ENCODE measurements at regions of chr19 and their contacts with region 1.

Region 1: DNA sequence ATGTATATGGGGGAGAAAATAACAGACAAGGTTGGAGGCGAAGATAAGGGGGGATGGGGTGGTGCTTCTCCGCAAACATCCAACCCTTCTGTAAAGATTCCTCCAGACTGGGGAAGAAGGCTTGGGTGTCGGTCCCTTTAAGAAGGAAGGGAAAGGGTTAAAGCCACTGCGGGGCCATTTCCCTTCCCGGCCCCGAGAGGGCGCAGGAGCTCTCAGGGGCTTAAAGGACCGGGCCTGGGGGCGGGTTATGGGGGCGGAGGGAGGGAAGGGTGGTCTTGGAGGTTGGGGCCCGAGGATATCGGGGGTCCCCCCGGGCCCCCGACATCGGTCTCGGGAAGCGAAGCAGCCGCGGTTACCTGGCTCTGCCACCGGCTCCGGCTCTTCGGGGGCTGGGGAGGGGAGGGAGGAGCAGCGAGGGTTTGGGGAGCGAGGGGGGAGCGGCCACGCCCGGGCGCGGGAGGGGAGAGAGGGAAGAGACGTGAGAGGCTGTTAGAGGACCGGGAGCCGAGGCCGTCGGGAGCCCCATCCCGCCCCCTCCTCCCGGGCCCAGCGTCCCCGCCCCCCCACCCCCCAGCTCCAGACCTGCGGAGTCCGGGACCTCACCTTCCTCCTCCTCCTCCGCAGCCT is 2.8 kb downstream of the TNNT1 start:
- DNase-seq: peak; percentile 67
- H3K4me3 Mint-ChIP-seq: peak overlapping the region; percentile 63
- H3K27ac Mint-ChIP-seq: no peak overlapping the region
- H3K4me1 Mint-ChIP-seq: peaks cover 24% of the 10 kb centered on the region
- H3K27me3 Mint-ChIP-seq: peaks cover 63% of the 10 kb centered on the region
- CTCF ChIP-seq: peak; percentile 92

Region 2: DNA sequence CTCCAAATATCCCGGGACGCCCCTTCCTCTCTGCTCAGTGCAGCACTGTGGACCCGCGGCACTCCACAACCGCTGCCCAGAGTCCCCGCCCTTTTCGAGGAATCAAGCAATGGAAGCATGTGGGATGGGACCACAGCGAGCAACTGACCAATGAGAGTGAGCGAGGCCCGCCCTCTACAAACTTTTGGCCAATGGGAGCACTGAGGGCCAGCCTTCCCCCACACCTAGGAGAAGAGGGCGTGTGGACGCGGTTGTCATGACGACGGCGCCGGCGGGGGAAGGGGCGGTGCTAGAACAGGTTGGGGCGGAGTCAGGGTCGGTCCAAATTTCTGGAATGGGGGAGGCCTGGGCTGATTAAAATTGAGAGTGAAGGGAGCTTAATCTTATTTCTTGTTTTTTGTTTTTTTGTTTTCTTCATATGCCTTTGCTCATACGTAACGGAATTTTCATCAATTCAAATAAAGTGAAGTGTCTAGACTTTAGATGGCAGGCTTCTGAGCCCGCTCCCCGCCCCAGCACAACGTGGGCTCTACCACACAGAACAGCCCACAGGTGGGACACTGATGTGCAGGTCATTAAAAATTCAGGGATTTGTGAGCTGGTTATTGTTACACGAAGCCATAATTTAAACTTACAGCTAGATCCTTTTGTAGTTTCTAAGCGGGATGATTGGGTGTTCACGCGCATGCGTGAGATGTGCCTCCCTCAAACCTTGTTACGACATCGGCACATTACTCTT is 20.5 kb after region 1 on chr19 and contains the start of gene DNAAF3:
- CTCF ChIA-PET with region 1: interaction called, 19 read pairs
- intact Hi-C with region 1: loop called (anchors 2 kb)
- DNase-seq: peak; percentile 98
- H3K4me3 Mint-ChIP-seq: peak within 1 kb of the TSS; percentile 84
- H3K27ac Mint-ChIP-seq: peak within 1 kb of the TSS; percentile 96
- H3K4me1 Mint-ChIP-seq: peaks cover 6% of the 10 kb centered on the region
- H3K27me3 Mint-ChIP-seq: peaks cover 22% of the 10 kb centered on the region
- CTCF ChIP-seq: no peak
- total RNA-seq, gene DNAAF3: 10.3 and 13.1 TPM in 2 replicates

Region 3: DNA sequence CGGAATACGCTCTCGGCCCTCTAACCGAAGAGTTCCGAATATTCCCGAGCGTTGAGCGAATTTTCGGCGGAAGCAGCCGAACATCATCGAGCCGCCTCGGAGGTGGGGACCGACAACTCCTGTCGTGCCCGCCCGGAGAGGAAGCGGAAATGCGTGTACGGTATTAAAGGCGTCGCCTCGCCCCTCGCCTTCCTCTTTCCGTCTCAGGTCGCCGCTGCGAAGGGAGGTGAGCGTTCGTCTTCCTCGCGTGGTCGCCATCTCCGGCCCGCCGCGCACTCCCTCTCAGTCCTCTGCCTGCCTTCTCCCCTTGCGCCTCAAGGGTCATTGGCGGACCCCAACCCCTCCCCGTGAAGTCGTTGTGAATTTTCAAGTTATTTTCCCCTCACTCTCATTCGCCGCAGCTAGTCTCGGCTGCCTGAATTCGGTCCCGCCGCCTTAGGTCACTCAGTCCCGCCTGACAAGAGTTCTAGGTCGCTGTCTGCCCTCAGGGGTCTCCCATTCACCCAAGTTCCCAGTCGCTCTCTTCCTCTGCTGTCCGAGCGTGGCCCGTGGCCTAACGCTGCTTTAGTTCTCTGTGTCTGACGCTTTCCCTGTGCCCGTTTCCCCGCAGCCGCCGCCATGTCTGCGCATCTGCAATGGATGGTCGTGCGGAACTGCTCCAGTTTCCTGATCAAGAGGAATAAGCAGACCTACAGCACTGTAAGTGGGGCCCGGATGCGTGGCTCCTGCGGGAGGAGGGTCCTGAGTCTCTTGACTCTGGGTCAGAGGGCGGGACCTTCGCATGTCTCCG is 239.7 kb after region 1 on chr19 and contains the start of gene RPL28:
- CTCF ChIA-PET with region 1: interaction called, 3 read pairs
- intact Hi-C with region 1: loop called (anchors 10 kb)
- DNase-seq: peak; percentile 99
- H3K4me3 Mint-ChIP-seq: peak within 1 kb of the TSS; percentile 91
- H3K27ac Mint-ChIP-seq: peak within 1 kb of the TSS; percentile 97
- H3K4me1 Mint-ChIP-seq: peaks cover 49% of the 10 kb centered on the region
- H3K27me3 Mint-ChIP-seq: no peaks in the 10 kb centered on the region
- CTCF ChIP-seq: no peak
- total RNA-seq, gene RPL28: 1,462 and 1,520 TPM in 2 replicates

Region 4: GRCh38 chr19:55503502-55504251 is 357.5 kb after region 1 on chr19:
- CTCF ChIA-PET with region 1: interaction called, 17 read pairs
- intact Hi-C with region 1: loop called (anchors 5 kb)
- DNase-seq: peak; percentile 92
- H3K4me3 Mint-ChIP-seq: peak overlapping the region; percentile 39
- H3K27ac Mint-ChIP-seq: no peak overlapping the region
- H3K4me1 Mint-ChIP-seq: no peaks in the 10 kb centered on the region
- H3K27me3 Mint-ChIP-seq: peaks cover 58% of the 10 kb centered on the region
- CTCF ChIP-seq: peak; percentile 98

Region 5: GRCh38 chr19:55632463-55632834 is 486.3 kb after region 1 on chr19:
- CTCF ChIA-PET with region 1: interaction called, 6 read pairs
- intact Hi-C with region 1: loop called (anchors 10 kb)
- DNase-seq: peak; percentile 94
- H3K4me3 Mint-ChIP-seq: peak overlapping the region; percentile 22
- H3K27ac Mint-ChIP-seq: no peak overlapping the region
- H3K4me1 Mint-ChIP-seq: peaks cover 32% of the 10 kb centered on the region
- H3K27me3 Mint-ChIP-seq: no peaks in the 10 kb centered on the region
- CTCF ChIP-seq: peak; percentile 63

Measured in Calu3 (cell line).